ENCODE measurements at regions of chr3 and their contacts with region 1.

Region 1: DNA sequence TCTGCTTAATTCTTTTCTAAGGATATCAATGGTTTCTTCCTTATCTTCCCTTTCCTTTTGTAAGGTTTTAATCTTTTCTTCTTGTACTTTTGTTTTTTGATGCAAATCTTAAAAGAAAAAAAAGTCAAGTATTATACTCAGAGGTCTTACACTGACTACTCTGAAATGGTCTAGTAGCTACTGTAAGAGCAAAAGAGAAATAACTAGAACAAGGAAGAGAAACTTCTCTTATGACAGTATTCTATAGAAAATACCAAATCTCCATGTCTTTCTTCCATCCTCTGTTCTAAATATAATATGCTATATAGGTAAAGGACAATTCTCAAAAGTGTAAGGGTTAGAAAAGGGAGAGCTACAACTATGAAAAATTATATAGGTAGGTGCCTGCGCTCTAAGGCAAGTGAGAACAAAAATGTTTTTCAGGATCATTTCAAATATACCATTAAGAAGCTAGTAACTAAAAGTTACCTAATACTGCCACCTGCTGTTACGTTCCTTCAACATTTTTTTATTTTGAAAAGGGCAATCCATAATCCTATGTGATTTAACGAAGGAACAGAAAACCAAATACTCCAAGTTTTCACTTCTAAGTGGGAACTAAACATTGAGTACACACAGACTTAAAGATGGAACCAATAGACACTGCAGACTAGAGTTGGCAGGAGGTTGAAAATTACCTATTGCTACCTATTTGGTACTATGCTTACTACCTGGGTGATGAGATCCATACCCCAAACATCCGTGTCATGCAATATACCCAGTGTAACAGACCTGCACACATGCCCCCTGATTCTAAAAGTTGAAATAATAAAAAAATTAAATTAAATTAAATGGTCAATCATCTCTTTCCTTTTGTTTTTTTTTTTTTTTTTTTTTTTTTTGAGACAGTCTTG is 36.7 kb downstream of the CIP2A start:
- DNase-seq: peak in 2 of 5 donors; percentile 20 to 26
- H3K4me3 ChIP-seq: no peak overlapping the region
- H3K4me3 Mint-ChIP-seq: peak overlapping the region in 1 of 7 donors; percentile 6
- H3K27ac ChIP-seq: no peak overlapping the region
- H3K27ac Mint-ChIP-seq: peak overlapping the region in 5 of 8 donors; percentile 6 to 36 (median 29)
- H3K4me1 ChIP-seq: no peaks in the 10 kb centered on the region
- H3K4me1 Mint-ChIP-seq: peaks cover 9 to 22% (median 13%) of the 10 kb centered on the region in 3 donors
- H3K27me3 ChIP-seq: no peaks in the 10 kb centered on the region
- H3K27me3 Mint-ChIP-seq: no peaks in the 10 kb centered on the region

Region 2: GRCh38 chr3:108489771-108490170 is 62.7 kb before region 1 on chr3:
- CTCF ChIA-PET with region 1: interaction called, 28 read pairs
- POLR2A ChIA-PET with region 1: no interaction called
- DNase-seq: peak; percentile 6 to 55 (median 48)
- H3K4me3 ChIP-seq: no peak overlapping the region
- H3K4me3 Mint-ChIP-seq: no peak overlapping the region
- H3K27ac ChIP-seq: no peak overlapping the region
- H3K27ac Mint-ChIP-seq: peak overlapping the region in 1 of 8 donors; percentile 2
- H3K4me1 ChIP-seq: no peaks in the 10 kb centered on the region
- H3K4me1 Mint-ChIP-seq: peaks cover 4 to 5% (median 5%) of the 10 kb centered on the region in 3 donors
- H3K27me3 ChIP-seq: no peaks in the 10 kb centered on the region
- H3K27me3 Mint-ChIP-seq: no peaks in the 10 kb centered on the region

Region 3: DNA sequence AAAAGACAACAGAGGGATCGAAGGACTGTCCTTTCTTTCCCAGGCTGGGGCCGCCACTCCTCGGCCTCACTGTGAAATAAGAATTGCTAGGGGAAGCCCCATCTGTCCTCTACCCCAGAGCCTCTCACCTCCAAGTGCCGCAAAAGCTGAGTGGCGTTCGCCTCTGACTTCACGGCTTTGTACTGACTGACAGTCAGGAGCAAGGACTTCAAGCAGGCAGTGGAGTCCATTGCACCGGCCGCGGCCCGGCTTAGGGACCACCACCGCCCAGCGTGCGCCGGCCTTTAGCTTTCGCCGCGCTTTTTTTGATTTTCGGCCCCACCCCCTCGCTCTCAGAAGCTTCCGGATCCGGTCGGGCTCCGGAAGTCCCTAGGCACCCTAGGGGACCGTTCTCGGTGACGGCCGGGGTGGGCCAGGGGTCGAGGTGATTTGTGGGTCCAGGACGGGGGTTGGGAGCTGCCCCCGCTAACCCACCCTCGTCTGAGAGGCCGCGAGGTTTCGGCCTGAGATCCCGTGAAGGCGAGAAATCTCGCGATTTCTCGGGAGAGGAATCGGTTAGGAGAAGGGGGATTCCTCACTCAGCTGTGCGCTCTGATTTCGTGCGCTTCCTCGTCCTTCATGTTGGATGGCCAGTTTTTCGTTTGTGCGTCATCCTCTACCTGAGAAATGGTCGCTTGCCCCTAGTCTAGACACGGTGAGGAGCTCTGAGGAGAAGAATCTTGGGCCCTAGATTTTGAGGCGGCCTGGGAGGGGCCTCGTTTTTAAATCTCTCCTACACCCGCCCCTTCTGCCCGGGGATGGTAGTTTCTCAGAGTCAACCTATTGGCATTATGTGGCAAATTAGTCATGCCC is 36.9 kb after region 1 on chr3 and contains the starts of genes CIP2A and DZIP3:
- CTCF ChIA-PET with region 1: interaction called, 10 read pairs
- POLR2A ChIA-PET with region 1: no interaction called
- DNase-seq: peak; percentile 71 to 88 (median 86)
- H3K4me3 ChIP-seq: peak within 1 kb of the TSS; percentile 88
- H3K4me3 Mint-ChIP-seq: peak within 1 kb of the TSS; percentile 95 to 99 (median 98)
- H3K27ac ChIP-seq: peak within 1 kb of the TSS; percentile 90
- H3K27ac Mint-ChIP-seq: peak within 1 kb of the TSS; percentile 98 to 100 (median 99)
- H3K4me1 ChIP-seq: peaks cover 17% of the 10 kb centered on the region
- H3K4me1 Mint-ChIP-seq: peaks cover 29 to 59% (median 49%) of the 10 kb centered on the region in 3 donors
- H3K27me3 ChIP-seq: no peaks in the 10 kb centered on the region
- H3K27me3 Mint-ChIP-seq: no peaks in the 10 kb centered on the region
- total RNA-seq, gene CIP2A: 41.7 to 42.6 TPM
- total RNA-seq, gene DZIP3: 8.6 to 10.5 TPM

Region 4: GRCh38 chr3:109132801-109133473 is 580.4 kb after region 1 on chr3:
- CTCF ChIA-PET with region 1: no interaction called
- POLR2A ChIA-PET with region 1: no interaction called
- DNase-seq: no peak
- H3K4me3 ChIP-seq: no peak overlapping the region
- H3K4me3 Mint-ChIP-seq: no peak overlapping the region
- H3K27ac ChIP-seq: no peak overlapping the region
- H3K27ac Mint-ChIP-seq: no peak overlapping the region
- H3K4me1 ChIP-seq: no peaks in the 10 kb centered on the region
- H3K4me1 Mint-ChIP-seq: no peaks in the 10 kb centered on the region
- H3K27me3 ChIP-seq: no peaks in the 10 kb centered on the region
- H3K27me3 Mint-ChIP-seq: peaks cover 2 to 4% of the 10 kb centered on the region in 2 donors